HCT116 (cell line): ENCODE measurements at regions of chr11 and their contacts with region 1.

Region 1: DNA sequence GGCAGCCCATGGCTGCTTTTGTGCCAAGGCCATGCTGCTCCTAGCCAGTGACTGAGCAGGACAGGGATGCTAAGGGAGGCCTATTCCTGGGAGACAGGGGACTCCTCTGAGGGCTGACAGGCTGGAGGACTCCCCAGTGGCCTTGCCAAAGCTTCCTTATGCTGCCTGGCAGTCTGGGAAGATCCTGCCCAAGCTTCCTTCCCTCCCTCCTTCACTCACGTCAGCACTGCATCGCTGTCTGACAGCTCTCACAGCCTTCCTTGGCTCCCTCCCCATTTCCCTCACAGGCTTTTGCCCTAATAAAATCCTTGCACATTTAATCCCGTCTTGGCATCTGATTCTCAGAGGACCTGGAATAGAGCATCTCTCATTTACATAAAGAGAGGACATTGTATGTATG is 26.5 kb downstream of the HTR3A start:
- DNase-seq: no peak
- ATAC-seq: no peak
- H3K4me3 ChIP-seq: no peak overlapping the region
- H3K27ac ChIP-seq: no peak overlapping the region
- H3K4me1 ChIP-seq: no peaks in the 10 kb centered on the region
- H3K27me3 ChIP-seq: peaks cover 41% of the 10 kb centered on the region
- CTCF ChIP-seq: no peak
- POLR2A ChIP-seq: no peak
- RAD21 ChIP-seq: no peak

Region 2: DNA sequence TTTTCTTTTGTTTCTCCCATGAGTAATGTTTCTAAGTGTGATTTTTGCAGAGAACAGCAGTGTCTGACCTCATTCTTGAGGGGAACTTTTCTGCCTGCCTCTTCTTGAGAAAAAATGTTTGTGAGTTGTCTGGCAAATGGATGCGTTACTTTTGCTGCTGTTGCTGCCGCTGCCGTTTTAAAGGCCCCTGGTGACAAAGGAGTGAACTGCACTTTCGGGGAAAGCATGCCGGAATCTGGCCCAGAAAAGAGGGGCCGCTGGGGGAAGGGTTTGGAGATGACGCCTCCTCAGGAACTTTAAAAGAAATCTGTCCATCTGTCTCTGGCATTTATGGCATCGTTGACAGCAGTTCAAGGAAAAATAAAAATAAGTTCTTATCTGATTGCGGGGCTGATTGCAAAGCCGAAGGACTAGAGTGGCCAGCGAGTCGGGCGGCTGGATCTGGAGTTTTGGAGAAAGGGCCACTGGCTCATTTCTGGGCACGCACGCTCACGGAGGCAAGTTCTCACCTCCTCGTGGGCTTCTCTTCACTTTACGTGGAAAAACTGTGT is 74.5 kb after region 1 on chr11:
- CTCF ChIA-PET with region 1: no interaction called
- POLR2A ChIA-PET with region 1: no interaction called
- RAD21 ChIA-PET with region 1: no interaction called
- intact Hi-C with region 1: loop called (anchors 2 kb)
- DNase-seq: peak; percentile 6
- ATAC-seq: peak; percentile 89
- H3K4me3 ChIP-seq: no peak overlapping the region
- H3K27ac ChIP-seq: no peak overlapping the region
- H3K4me1 ChIP-seq: no peaks in the 10 kb centered on the region
- H3K27me3 ChIP-seq: peaks cover 31% of the 10 kb centered on the region
- CTCF ChIP-seq: peak; percentile 10 to 78 (median 66); a peak in 5 of 6 replicates
- POLR2A ChIP-seq: no peak
- RAD21 ChIP-seq: peak; percentile 29; the same call in 1 of the 2 replicates